ENCODE measurements at regions of chr3 and their contacts with region 1.

Region 1: GRCh38 chr3:79521238-79521848 is 246.5 kb downstream of the ROBO1 start:
- DNase-seq: no peak

Region 2: DNA sequence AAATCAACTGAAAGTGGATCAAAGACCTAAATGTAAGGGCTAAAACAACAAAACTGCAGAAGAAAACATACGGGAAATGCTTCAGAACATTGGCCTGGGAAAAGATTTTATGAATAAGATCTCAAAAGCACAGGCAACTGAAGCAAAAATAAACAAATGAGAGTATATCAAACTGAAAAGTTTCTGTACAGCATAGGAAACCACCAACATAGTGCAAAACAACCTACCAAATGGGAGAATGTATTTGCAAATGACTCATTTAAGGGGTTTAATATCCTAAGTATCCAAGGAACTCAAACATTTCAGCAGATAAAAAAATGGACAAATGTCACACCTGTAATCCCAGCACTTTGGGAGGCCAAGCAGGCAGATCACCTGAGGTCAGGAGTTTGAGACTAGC is 242.7 kb before region 1 on chr3:
- intact Hi-C with region 1: no loop called
- DNase-seq: no peak

Region 3: DNA sequence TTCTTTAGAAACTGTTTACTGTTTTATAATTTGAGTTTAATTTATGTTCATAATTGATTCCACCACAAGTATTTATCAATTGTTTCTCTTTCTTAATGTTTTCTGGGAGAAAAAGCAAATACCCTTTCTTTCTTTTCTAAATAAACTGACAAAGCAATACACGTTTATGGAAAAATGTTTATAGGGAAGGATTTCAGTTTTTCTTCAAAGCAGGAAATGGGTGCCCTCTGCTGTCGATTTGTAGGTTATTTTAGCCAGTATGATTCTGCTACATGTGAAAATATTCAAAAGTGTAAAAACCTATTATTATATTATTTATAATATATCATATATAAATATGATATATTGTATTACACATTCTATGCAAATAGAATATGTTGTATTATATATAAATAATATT is 1167.5 kb after region 1 on chr3:
- intact Hi-C with region 1: loop called (anchors 2 kb)
- DNase-seq: no peak

Region 4: DNA sequence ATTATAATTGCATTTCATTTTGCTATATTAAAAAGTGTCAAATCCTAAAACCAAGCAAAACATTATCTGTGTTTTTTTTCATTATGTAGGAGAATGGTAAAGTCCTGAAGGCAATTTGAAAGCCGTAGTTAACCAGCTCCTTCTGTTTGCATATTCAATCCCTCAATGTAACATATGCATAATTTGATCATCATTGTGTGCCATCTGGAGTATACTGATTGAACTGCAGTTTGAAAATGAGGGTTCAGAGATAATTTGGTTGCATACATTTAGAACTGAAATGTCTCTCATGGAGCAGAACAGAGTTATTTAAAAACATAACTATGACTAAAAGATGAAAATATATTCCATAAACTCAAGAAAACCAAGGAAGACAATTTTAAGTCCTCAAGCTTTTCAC is 1721.5 kb after region 1 on chr3:
- intact Hi-C with region 1: loop called (anchors 10 kb)
- DNase-seq: no peak

Measured in posterior cingulate gyrus (tissue), 11 donors.